HEK293 (cell line): ENCODE measurements at regions of chr5 and their contacts with region 1.

Region 1: GRCh38 chr5:173573126-173573960 is 43.1 kb downstream of the BOD1 start:
- H3K4me3 ChIP-seq: no peak overlapping the region
- H3K27ac ChIP-seq: no peak overlapping the region
- H3K4me1 ChIP-seq: no peaks in the 10 kb centered on the region
- CTCF ChIP-seq: peak; percentile 90

Region 2: DNA sequence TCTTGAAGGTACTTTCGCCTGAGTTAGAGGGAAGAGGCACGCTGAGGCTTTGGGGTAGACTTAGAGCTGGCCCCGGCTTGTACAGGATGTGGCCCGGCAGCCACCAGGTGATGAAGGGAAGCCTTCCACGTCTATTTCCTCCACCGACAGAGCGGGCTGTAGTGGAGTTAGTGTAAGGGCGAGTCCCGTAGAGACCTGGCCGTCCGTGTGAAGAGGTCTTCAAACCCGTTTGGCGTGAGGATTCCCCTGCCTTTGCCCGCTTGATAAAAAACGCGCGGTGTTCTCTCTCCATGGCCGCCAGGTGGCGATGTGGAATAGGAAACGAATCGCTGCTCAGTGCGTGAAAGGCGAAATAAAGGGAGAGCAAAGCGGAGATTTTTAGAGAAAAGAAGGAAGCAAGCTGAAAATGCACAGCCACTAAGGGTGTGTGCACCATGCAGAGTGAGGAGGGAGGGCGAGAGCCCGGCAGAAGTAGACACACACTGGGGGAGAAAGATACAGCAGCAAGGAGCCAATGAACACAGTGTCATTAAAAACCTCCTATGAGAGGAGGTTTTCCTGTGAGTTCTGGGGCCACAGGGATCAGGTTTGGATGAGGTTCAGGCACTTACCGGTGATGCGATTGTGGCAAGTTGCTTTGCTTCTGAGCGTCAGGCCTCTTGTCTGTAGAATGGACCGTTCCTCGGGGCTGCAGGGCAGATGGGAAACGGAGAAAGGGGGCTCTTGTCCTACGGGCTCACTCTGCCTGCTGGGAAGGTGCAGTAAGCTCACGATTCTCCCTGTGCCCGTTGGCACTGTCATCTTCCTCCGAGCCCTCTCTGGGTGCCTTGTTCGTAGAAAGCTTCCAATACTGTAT is 279.3 kb before region 1 on chr5:
- CTCF ChIA-PET with region 1: interaction called, 19 read pairs
- POLR2A ChIA-PET with region 1: no interaction called
- H3K4me3 ChIP-seq: no peak overlapping the region
- H3K27ac ChIP-seq: no peak overlapping the region
- H3K4me1 ChIP-seq: peaks cover 4% of the 10 kb centered on the region; the same call in 1 of the 2 replicates
- CTCF ChIP-seq: peak; percentile 94

Region 3: GRCh38 chr5:173550641-173551040 is 22.7 kb before region 1 on chr5:
- CTCF ChIA-PET with region 1: interaction called, 10 read pairs
- POLR2A ChIA-PET with region 1: no interaction called
- H3K4me3 ChIP-seq: no peak overlapping the region
- H3K27ac ChIP-seq: no peak overlapping the region
- H3K4me1 ChIP-seq: no peaks in the 10 kb centered on the region
- CTCF ChIP-seq: no peak

Region 4: GRCh38 chr5:173643963-173644362 is 70.6 kb after region 1 on chr5:
- CTCF ChIA-PET with region 1: no interaction called
- POLR2A ChIA-PET with region 1: no interaction called
- H3K4me3 ChIP-seq: no peak overlapping the region
- H3K27ac ChIP-seq: no peak overlapping the region
- H3K4me1 ChIP-seq: no peaks in the 10 kb centered on the region
- CTCF ChIP-seq: no peak

Region 5: DNA sequence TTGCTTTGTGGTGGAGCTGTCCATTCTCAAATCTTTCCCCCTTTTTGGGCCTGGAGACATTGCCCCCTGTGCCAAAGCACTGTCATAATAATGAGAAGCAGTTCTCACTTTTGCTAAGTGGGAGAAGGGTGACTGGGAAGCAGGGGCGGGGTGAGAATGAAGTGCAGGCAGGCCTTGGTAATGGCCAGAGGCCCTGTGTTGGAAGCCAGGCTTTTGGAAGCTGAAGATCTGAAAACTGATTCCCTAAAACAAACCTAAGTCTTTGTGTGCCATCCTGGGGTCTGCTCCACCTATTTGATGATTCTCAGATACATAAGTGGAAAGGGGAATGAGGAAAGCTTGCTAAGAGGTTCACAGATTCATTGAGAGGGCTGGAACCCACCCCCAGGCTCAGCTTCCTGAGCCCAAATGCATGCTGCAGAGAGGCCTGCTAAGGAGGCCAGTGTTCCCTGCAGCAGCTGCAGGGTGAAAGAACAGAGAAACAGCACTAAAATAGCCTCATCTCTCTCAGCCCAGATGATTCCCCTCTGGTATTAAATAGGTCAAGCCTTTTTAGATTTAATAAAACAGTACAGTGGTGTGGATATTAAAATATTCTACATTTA is 547.2 kb after region 1 on chr5:
- CTCF ChIA-PET with region 1: no interaction called
- POLR2A ChIA-PET with region 1: no interaction called
- H3K4me3 ChIP-seq: no peak overlapping the region
- H3K27ac ChIP-seq: no peak overlapping the region
- H3K4me1 ChIP-seq: no peaks in the 10 kb centered on the region
- CTCF ChIP-seq: no peak